HepG2 (cell line): ENCODE measurements at regions of chr11 and their contacts with region 1.

Region 1: GRCh38 chr11:34599406-34599901 is 21.4 kb upstream of the EHF start:
- DNase-seq: peak; percentile 79
- ATAC-seq: peak; percentile 1; the same call in 1 of the 3 replicates
- H3K4me3 ChIP-seq: peak overlapping the region; percentile 49 to 67 (median 66)
- H3K27ac ChIP-seq: peak overlapping the region; percentile 95
- H3K4me1 ChIP-seq: peaks cover 86% of the 10 kb centered on the region
- H3K27me3 ChIP-seq: no peaks in the 10 kb centered on the region
- CTCF ChIP-seq: no peak
- EP300 ChIP-seq: peak in 1 of 2 experiments; percentile 52; a peak in 1 of 4 replicates
- POLR2A ChIP-seq: no peak
- RAD21 ChIP-seq: no peak

Region 2: DNA sequence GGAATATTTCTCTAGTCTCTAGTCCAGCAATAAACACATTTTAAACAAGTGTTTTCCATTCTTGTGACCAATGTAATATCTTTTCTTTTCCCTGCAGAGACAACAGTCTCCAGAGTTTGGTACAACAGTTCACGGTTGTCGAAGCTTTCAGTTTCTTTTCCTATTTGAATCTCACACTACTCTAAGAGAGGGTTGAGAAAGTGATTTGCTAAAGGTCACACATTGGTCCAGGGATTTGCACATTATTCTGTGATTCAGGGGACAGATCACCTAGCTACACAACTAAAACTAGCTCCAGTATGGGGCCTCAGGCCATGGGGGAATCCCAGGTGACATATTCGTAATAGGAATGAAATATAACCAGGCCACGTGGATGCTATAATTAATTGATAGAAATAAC is 1209.8 kb before region 1 on chr11:
- CTCF ChIA-PET with region 1: no interaction called
- POLR2A ChIA-PET with region 1: no interaction called
- in situ Hi-C with region 1: no loop called
- intact Hi-C with region 1: no loop called
- DNase-seq: no peak
- ATAC-seq: no peak
- H3K4me3 ChIP-seq: no peak overlapping the region
- H3K27ac ChIP-seq: no peak overlapping the region
- H3K4me1 ChIP-seq: no peaks in the 10 kb centered on the region
- H3K27me3 ChIP-seq: peaks cover 0 to 19% of the 10 kb centered on the region in 2 experiments; a peak in 3 of 5 replicates
- CTCF ChIP-seq: no peak
- EP300 ChIP-seq: no peak
- POLR2A ChIP-seq: no peak
- RAD21 ChIP-seq: no peak

Region 3: GRCh38 chr11:34480314-34480713 is 119.1 kb before region 1 on chr11:
- CTCF ChIA-PET with region 1: no interaction called
- POLR2A ChIA-PET with region 1: no interaction called
- in situ Hi-C with region 1: no loop called
- intact Hi-C with region 1: no loop called
- DNase-seq: no peak
- ATAC-seq: no peak
- H3K4me3 ChIP-seq: no peak overlapping the region
- H3K27ac ChIP-seq: no peak overlapping the region
- H3K4me1 ChIP-seq: peaks cover 26% of the 10 kb centered on the region
- H3K27me3 ChIP-seq: no peaks in the 10 kb centered on the region
- CTCF ChIP-seq: no peak
- EP300 ChIP-seq: no peak
- POLR2A ChIP-seq: no peak
- RAD21 ChIP-seq: no peak

Region 4: GRCh38 chr11:34614344-34615104 is 15.1 kb after region 1 on chr11:
- CTCF ChIA-PET with region 1: no interaction called
- POLR2A ChIA-PET with region 1: interaction called, 13 read pairs
- in situ Hi-C with region 1: no loop called
- intact Hi-C with region 1: no loop called
- DNase-seq: no peak
- ATAC-seq: no peak
- H3K4me3 ChIP-seq: no peak overlapping the region
- H3K27ac ChIP-seq: no peak overlapping the region
- H3K4me1 ChIP-seq: peaks cover 32% of the 10 kb centered on the region
- H3K27me3 ChIP-seq: no peaks in the 10 kb centered on the region
- CTCF ChIP-seq: no peak
- EP300 ChIP-seq: no peak
- POLR2A ChIP-seq: no peak
- RAD21 ChIP-seq: no peak

Region 5: GRCh38 chr11:34633990-34634693 is 34.7 kb after region 1 on chr11:
- CTCF ChIA-PET with region 1: no interaction called
- POLR2A ChIA-PET with region 1: interaction called, 58 read pairs
- in situ Hi-C with region 1: no loop called
- intact Hi-C with region 1: no loop called
- DNase-seq: peak; percentile 45
- ATAC-seq: peak; percentile 93
- H3K4me3 ChIP-seq: peak overlapping the region in 2 of 3 experiments; percentile 11 to 29; a peak in 3 of 6 replicates
- H3K27ac ChIP-seq: peak overlapping the region; percentile 21
- H3K4me1 ChIP-seq: peaks cover 61% of the 10 kb centered on the region
- H3K27me3 ChIP-seq: no peaks in the 10 kb centered on the region
- CTCF ChIP-seq: 0 out of 2 replicates have a peak, but pooled peaks have one; percentile 4
- EP300 ChIP-seq: no peak
- POLR2A ChIP-seq: no peak
- RAD21 ChIP-seq: no peak

Region 6: GRCh38 chr11:34640050-34640923 is 40.8 kb after region 1 on chr11:
- CTCF ChIA-PET with region 1: no interaction called
- POLR2A ChIA-PET with region 1: interaction called, 58 read pairs
- in situ Hi-C with region 1: no loop called
- intact Hi-C with region 1: loop called (anchors 2 kb)
- DNase-seq: peak; percentile 94
- ATAC-seq: peak; percentile 98
- H3K4me3 ChIP-seq: peak overlapping the region in 1 of 3 experiments; percentile 47; a peak in 2 of 6 replicates
- H3K27ac ChIP-seq: peak overlapping the region; percentile 66
- H3K4me1 ChIP-seq: peaks cover 82% of the 10 kb centered on the region
- H3K27me3 ChIP-seq: no peaks in the 10 kb centered on the region
- CTCF ChIP-seq: peak; percentile 27; the same call in 1 of the 2 replicates
- EP300 ChIP-seq: peak in 1 of 2 experiments; percentile 81; a peak in 2 of 4 replicates
- POLR2A ChIP-seq: peak in 1 of 2 experiments; percentile 52; a peak in 2 of 4 replicates
- RAD21 ChIP-seq: peak; percentile 32; the same call in 1 of the 2 replicates

Region 7: DNA sequence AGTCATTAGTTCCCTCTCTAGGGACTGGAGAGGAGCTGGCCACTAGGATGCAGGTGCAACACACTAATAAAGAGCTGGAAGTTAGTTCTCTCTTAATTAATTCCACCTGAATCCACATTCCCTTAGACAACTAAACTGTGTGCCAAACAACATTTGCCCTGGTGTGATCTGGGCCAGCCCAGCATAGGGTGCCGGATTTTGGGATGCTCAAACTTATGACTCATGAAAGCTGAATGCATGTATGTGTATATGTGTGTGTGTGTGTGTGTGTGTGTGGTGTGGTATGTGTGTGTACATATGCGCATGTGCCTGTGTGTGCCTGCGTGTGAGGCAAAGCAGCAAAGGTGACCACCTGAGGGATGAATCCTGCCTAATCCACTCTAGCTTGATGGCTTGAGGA is 132.1 kb after region 1 on chr11:
- CTCF ChIA-PET with region 1: no interaction called
- POLR2A ChIA-PET with region 1: no interaction called
- in situ Hi-C with region 1: no loop called
- intact Hi-C with region 1: no loop called
- DNase-seq: no peak
- ATAC-seq: no peak
- H3K4me3 ChIP-seq: no peak overlapping the region
- H3K27ac ChIP-seq: no peak overlapping the region
- H3K4me1 ChIP-seq: peaks cover 22% of the 10 kb centered on the region
- H3K27me3 ChIP-seq: no peaks in the 10 kb centered on the region
- CTCF ChIP-seq: no peak
- EP300 ChIP-seq: no peak
- POLR2A ChIP-seq: no peak
- RAD21 ChIP-seq: no peak

Region 8: GRCh38 chr11:34825670-34826383 is 226.4 kb after region 1 on chr11:
- CTCF ChIA-PET with region 1: no interaction called
- POLR2A ChIA-PET with region 1: interaction called, 13 read pairs
- in situ Hi-C with region 1: no loop called
- intact Hi-C with region 1: loop called (anchors 5 kb)
- DNase-seq: peak; percentile 99
- ATAC-seq: peak; percentile 96
- H3K4me3 ChIP-seq: peak overlapping the region in 2 of 3 experiments; percentile 15 to 38; a peak in 2 of 6 replicates
- H3K27ac ChIP-seq: peak overlapping the region; percentile 92
- H3K4me1 ChIP-seq: peaks cover 62% of the 10 kb centered on the region
- H3K27me3 ChIP-seq: no peaks in the 10 kb centered on the region
- CTCF ChIP-seq: no peak
- EP300 ChIP-seq: peak; percentile 36 to 73; a peak in 2 of 4 replicates
- POLR2A ChIP-seq: peak; percentile 33 to 70; a peak in 2 of 4 replicates
- RAD21 ChIP-seq: peak; percentile 8; the same call in 1 of the 2 replicates

Region 9: GRCh38 chr11:34860034-34860433 is 260.6 kb after region 1 on chr11:
- CTCF ChIA-PET with region 1: no interaction called
- POLR2A ChIA-PET with region 1: no interaction called
- in situ Hi-C with region 1: no loop called
- intact Hi-C with region 1: no loop called
- DNase-seq: no peak
- ATAC-seq: no peak
- H3K4me3 ChIP-seq: no peak overlapping the region
- H3K27ac ChIP-seq: no peak overlapping the region
- H3K4me1 ChIP-seq: peaks cover 22% of the 10 kb centered on the region
- H3K27me3 ChIP-seq: no peaks in the 10 kb centered on the region
- CTCF ChIP-seq: no peak
- EP300 ChIP-seq: no peak
- POLR2A ChIP-seq: no peak
- RAD21 ChIP-seq: no peak

Region 10: DNA sequence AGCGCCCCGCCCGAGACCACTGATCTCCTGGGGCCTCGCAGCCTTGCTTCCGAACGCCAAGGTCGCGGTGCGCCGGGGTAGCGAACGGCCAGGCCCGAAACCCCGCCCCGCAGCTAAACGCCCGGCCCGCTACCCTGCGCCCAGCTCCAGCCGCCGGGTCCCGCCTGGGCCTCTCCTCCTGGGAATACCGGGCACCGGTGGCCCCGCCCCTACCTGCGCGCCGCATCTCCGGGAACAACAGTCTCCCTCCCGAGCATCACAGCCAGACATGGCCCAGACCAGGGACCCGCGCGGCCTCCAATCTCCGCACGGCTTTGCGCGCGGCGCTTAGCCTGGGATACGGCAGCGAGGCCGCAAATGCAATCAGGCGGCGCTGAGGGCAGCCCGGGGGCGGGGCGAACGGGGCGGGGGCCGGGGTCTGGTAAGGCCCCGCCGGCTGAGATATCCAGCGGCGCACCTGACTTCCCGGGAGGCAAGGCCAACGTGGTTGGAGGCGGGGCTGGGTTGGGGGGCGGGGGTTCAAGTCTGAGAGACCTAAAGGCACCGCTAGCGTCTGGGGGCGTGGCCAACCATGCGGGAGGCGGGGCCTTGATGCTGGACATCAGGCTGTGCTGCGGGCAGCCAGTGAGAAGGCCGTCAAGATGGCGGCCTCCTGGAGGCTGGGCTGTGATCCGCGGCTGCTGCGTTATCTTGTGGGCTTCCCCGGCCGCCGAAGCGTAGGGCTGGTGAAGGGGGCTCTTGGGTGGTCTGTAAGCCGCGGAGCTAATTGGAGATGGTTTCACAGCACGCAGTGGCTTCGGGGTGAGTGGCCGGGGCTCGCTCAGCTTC is 316.8 kb after region 1 on chr11 and contains the starts of genes APIP and PDHX:
- CTCF ChIA-PET with region 1: no interaction called
- POLR2A ChIA-PET with region 1: interaction called, 15 read pairs
- in situ Hi-C with region 1: no loop called
- intact Hi-C with region 1: no loop called
- DNase-seq: peak; percentile 94
- ATAC-seq: peak; percentile 95
- H3K4me3 ChIP-seq: peak within 1 kb of the TSS; percentile 89 to 100 (median 98)
- H3K27ac ChIP-seq: peak within 1 kb of the TSS; percentile 99
- H3K4me1 ChIP-seq: peaks cover 52% of the 10 kb centered on the region
- H3K27me3 ChIP-seq: no peaks in the 10 kb centered on the region; a peak in 1 of 5 replicates
- CTCF ChIP-seq: no peak; the same call in 1 of the 2 replicates
- EP300 ChIP-seq: no peak
- POLR2A ChIP-seq: peak; percentile 94 to 96
- RAD21 ChIP-seq: 0 out of 2 replicates have a peak, but pooled peaks have one; percentile 27
- total RNA-seq, gene APIP: 31.0 and 41.8 TPM in 2 replicates
- total RNA-seq, gene PDHX: 73.8 and 106 TPM in 2 replicates